ENCODE measurements at regions of chr1 and their contacts with region 1.

Region 1: GRCh38 chr1:227728059-227728891 is 6.8 kb downstream of the JMJD4 start:
- DNase-seq: peak; percentile 88
- H3K4me3 ChIP-seq: peak overlapping the region; percentile 47 to 60 (median 56)
- H3K27ac ChIP-seq: peak overlapping the region; percentile 66 to 79 (median 73)
- H3K4me1 ChIP-seq: peaks cover 0 to 34% (median 28%) of the 10 kb centered on the region in 4 donors
- H3K27me3 ChIP-seq: no peaks in the 10 kb centered on the region
- CTCF ChIP-seq: no peak
- EP300 ChIP-seq: no peak
- POLR2A ChIP-seq: no peak

Region 2: DNA sequence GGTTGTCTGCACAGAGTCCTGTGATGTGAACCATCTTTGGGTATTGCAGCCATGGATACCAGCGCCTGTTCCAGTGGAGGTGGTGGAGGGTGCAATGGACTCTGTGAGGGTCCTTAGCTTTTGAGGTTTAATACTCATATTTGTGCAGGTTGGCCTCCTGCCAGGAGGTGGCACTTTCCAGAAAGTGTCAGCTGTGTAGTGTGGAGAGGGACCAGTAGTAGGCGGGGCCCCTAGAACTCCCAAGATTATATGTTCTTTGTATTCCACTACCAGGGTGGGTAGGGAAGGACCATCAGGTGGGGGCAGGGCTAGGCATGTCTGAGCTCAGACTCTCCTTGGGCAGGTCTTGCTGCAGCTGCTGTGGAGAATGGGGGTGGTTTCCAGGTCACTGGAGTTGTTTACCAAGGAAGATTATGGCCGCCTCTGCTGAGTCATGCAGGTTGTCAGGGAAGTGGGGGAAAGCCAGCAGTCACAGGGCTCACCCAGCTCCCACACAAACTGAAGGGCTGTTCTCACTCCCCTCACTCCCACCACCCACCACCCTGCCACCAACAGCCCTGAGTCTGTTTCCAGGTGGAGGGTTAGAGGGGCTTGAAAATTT is 196.2 kb before region 1 on chr1:
- intact Hi-C with region 1: no loop called
- DNase-seq: no peak
- H3K4me3 ChIP-seq: no peak overlapping the region
- H3K27ac ChIP-seq: no peak overlapping the region
- H3K4me1 ChIP-seq: no peaks in the 10 kb centered on the region
- H3K27me3 ChIP-seq: no peaks in the 10 kb centered on the region
- CTCF ChIP-seq: no peak
- EP300 ChIP-seq: no peak
- POLR2A ChIP-seq: no peak

Region 3: DNA sequence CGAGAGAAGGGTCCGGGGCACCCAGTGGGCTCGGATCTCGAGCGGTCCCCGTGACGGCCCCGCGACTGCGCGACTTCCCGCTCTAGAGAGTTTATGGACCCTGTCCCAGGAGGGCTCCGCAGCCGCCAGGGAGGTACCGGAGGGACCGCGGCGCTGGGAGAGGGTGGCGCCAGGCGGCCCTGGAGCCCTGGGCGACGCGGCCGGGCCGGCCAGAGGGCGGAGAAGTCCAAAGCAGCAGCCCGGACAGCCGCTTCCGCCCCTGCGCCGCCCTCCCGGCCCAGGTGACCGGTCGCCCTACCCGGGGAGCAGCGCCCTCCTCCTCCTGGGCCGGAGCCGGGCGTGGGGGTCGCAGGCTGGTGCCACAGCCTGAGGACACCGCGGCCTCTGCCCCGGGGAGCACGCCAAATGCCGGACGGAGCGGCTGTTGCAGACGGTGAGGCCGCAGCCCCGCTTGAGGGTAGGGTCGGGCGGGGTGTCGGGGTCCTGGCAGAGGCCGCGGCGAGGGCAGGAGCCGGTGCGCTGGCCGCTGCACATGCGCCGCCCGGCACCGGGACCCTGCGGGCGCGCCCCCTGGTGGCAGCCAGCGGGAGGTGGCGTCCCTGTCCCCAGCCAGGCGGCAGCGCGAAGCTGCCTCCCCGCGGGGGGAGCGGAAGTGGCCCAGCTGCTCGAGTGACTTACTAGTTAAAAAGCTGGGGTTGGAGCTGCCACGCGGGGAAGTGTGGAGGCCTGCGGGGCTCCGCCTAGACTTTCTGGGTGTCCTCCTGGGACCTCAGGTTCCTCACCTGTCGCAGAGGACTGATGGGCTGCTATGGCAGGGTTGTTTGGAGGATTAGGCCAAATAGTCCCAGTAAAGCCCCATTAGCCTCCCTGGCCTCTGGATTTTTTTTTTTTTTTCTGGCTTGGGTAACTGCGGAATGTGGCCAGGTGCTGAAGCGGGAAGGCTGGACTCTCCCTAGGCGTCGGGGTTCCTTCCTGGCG is 185.8 kb before region 1 on chr1:
- intact Hi-C with region 1: loop called (anchors 2 kb)
- DNase-seq: peak; percentile 94
- H3K4me3 ChIP-seq: peak overlapping the region; percentile 63 to 90 (median 77)
- H3K27ac ChIP-seq: peak overlapping the region; percentile 69 to 82 (median 76)
- H3K4me1 ChIP-seq: peaks cover 0 to 19% (median 17%) of the 10 kb centered on the region in 4 donors
- H3K27me3 ChIP-seq: no peaks in the 10 kb centered on the region
- CTCF ChIP-seq: peak; percentile 38 to 99 (median 63)
- EP300 ChIP-seq: no peak
- POLR2A ChIP-seq: no peak

Region 4: GRCh38 chr1:227563324-227564201 is 164.7 kb before region 1 on chr1 and contains the start of gene ZNF678:
- intact Hi-C with region 1: loop called (anchors 5 kb)
- DNase-seq: peak; percentile 96
- H3K4me3 ChIP-seq: peak within 1 kb of the TSS; percentile 51 to 78 (median 65)
- H3K27ac ChIP-seq: peak within 1 kb of the TSS; percentile 82 to 90 (median 86)
- H3K4me1 ChIP-seq: peaks cover 0 to 9% (median 6%) of the 10 kb centered on the region in 4 donors
- H3K27me3 ChIP-seq: peaks cover 6 to 32% (median 20%) of the 10 kb centered on the region in 3 donors
- CTCF ChIP-seq: no peak
- EP300 ChIP-seq: no peak
- POLR2A ChIP-seq: peak; percentile 21 to 53
- total RNA-seq, gene ZNF678: 5.3 to 15.3 (median 8.4) TPM

Region 5: GRCh38 chr1:227762233-227762911 is 34.1 kb after region 1 on chr1:
- intact Hi-C with region 1: loop called (anchors 5 kb)
- DNase-seq: peak; percentile 96
- H3K4me3 ChIP-seq: no peak overlapping the region
- H3K27ac ChIP-seq: peak overlapping the region; percentile 54 to 89 (median 75)
- H3K4me1 ChIP-seq: peaks cover 0 to 59% (median 56%) of the 10 kb centered on the region in 4 donors
- H3K27me3 ChIP-seq: no peaks in the 10 kb centered on the region
- CTCF ChIP-seq: peak; percentile 77 to 94 (median 88)
- EP300 ChIP-seq: no peak
- POLR2A ChIP-seq: no peak

Measured in sigmoid colon (tissue), 7 donors.